MCF 10A (cell line): ENCODE measurements at regions of chr19 and their contacts with region 1.

Region 1: DNA sequence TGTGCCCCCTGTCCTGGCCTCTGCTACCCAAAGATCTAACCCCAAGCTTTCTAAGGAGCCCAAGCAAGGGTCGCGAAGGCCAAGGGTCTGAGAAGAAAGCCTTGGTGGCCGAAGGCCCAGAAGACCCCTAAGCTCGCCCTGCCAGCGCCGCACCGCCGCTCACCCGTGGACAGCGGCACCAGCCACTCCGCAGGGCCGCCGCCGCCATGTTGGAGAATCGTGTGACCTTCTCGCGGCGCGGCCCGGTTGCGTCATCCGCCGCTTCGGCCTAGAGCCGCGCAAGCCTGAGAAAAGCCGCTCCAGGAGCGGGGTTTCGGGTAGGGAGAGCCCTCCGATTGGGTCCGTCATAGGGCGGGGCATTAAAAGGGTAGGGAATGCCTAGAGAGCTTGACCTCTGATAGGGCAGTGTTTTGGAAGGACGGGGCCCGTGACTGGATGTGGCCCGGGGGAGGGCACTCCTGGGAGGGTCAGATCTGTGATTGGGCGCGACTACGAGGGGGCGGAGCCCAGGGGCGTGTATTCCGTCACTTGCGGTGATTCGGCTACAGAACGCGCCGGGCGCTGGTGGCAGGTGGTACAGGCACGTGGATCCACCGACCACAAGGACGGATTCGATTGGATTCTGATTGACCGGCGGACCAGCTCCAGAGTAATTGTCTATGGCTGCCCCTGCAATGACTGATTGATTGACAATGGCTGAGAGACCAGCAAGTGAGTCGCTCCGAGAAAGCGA is at the start of gene TIMM44:
- DNase-seq: peak; percentile 100
- H3K4me3 Mint-ChIP-seq: peak within 1 kb of the TSS; percentile 94
- H3K27ac Mint-ChIP-seq: peak within 1 kb of the TSS; percentile 97
- H3K4me1 Mint-ChIP-seq: peaks cover 11% of the 10 kb centered on the region
- H3K27me3 Mint-ChIP-seq: no peaks in the 10 kb centered on the region
- CTCF ChIP-seq: no peak
- total RNA-seq, gene TIMM44: 91.3 and 142 TPM in 2 replicates

Region 2: GRCh38 chr19:7685541-7686416 is 257.8 kb before region 1 on chr19:
- CTCF ChIA-PET with region 1: no interaction called
- POLR2A ChIA-PET with region 1: no interaction called
- intact Hi-C with region 1: no loop called
- DNase-seq: no peak
- H3K4me3 Mint-ChIP-seq: no peak overlapping the region
- H3K27ac Mint-ChIP-seq: no peak overlapping the region
- H3K4me1 Mint-ChIP-seq: peaks cover 8% of the 10 kb centered on the region
- H3K27me3 Mint-ChIP-seq: no peaks in the 10 kb centered on the region
- CTCF ChIP-seq: no peak

Region 3: GRCh38 chr19:7762719-7763293 is 180.8 kb before region 1 on chr19 and contains the start of gene CLEC4M:
- CTCF ChIA-PET with region 1: no interaction called
- POLR2A ChIA-PET with region 1: no interaction called
- intact Hi-C with region 1: no loop called
- DNase-seq: no peak
- H3K4me3 Mint-ChIP-seq: no peak within 1 kb of the TSS
- H3K27ac Mint-ChIP-seq: no peak within 1 kb of the TSS
- H3K4me1 Mint-ChIP-seq: no peaks in the 10 kb centered on the region
- H3K27me3 Mint-ChIP-seq: peaks cover 41% of the 10 kb centered on the region
- CTCF ChIP-seq: no peak
- total RNA-seq, gene CLEC4M: not detected in 2 replicates

Region 4: DNA sequence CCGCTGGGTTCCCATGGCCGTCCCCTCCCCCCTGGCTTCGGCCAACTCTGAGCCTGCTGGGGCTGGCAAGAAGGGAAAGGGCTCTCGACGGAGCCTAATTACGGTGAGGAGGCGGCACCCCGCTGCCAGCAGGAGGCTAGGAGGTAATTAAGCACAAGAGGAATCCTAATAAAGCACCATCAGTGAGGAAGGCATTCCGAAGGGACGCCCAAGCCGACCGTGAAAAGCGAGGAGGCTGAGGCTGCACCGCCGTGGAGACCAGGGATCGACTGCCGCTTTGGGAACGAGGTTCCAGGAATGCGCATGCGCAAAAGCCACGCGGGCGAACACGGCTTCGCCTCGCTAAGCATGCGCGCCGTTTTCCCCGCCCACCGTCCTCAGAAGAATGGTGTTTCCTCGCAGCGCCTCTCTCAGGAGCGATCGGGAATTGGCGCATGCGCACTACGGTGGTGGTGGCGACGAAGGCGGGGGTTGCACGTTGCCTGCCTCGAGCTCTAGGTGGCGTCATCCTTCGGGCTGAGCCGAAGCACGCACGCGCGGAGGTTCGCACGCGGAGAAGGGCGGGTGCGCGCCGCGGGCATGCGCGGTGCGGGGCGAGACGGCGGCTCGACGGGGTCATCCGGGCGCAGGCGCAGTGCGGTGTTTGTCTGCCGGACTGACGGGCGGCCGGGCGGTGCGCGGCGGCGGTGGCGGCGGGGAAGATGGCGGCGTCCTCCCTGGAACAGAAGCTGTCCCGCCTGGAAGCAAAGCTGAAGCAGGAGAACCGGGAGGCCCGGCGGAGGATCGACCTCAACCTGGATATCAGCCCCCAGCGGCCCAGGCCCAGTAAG is 40.2 kb before region 1 on chr19 and contains the start of gene MAP2K7:
- CTCF ChIA-PET with region 1: interaction called, 5 read pairs
- POLR2A ChIA-PET with region 1: interaction called, 29 read pairs
- intact Hi-C with region 1: no loop called
- DNase-seq: peak; percentile 100
- H3K4me3 Mint-ChIP-seq: peak within 1 kb of the TSS; percentile 97
- H3K27ac Mint-ChIP-seq: peak within 1 kb of the TSS; percentile 98
- H3K4me1 Mint-ChIP-seq: peaks cover 32% of the 10 kb centered on the region
- H3K27me3 Mint-ChIP-seq: no peaks in the 10 kb centered on the region
- CTCF ChIP-seq: peak; percentile 42
- total RNA-seq, gene MAP2K7: 30.5 and 36.3 TPM in 2 replicates

Region 5: GRCh38 chr19:7928736-7929701 is 14.6 kb before region 1 on chr19:
- CTCF ChIA-PET with region 1: interaction called, 15 read pairs
- POLR2A ChIA-PET with region 1: interaction called, 56 read pairs
- intact Hi-C with region 1: no loop called
- DNase-seq: peak; percentile 82
- H3K4me3 Mint-ChIP-seq: peak overlapping the region; percentile 62
- H3K27ac Mint-ChIP-seq: peak overlapping the region; percentile 93
- H3K4me1 Mint-ChIP-seq: peaks cover 13% of the 10 kb centered on the region
- H3K27me3 Mint-ChIP-seq: no peaks in the 10 kb centered on the region
- CTCF ChIP-seq: peak; percentile 34

Region 6: DNA sequence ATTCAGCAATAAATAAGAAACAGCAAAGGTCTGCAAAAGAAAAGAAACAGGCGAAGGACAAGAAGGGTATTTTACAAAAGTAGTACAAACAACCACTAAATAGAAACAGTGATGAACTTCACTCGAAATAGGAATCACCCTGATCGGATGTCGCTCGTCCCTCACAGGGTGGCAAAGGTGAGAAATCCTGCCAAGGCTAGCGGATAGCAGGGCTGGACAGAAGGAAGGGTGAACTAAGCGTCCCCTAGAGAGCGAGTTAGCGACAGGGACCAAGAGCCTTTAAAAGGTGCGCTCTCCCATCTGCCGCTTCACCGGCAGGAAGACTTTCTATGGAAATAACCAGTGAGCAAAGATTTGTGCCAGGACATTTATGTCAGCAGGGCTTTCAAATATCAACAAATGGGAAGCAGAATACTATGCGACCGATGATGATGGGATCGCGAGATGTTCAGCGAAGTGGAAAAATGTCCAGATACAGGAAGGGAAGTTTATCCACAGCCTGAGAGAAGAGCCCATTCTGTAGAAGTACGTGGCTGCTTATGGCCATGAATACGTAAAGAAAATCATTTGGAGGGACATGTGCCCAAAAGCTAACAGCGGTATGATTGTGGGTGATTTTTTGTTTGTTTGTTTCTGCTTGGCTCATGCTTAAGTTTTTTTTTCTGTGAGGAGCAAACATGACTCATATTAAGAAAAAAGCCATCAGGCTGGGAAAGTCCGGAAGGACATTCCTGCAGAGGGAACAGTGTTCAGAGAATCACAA is 42.9 kb after region 1 on chr19:
- CTCF ChIA-PET with region 1: interaction called, 17 read pairs
- POLR2A ChIA-PET with region 1: interaction called, 21 read pairs
- intact Hi-C with region 1: loop called (anchors 5 kb)
- DNase-seq: peak; percentile 71
- H3K4me3 Mint-ChIP-seq: peak overlapping the region; percentile 50
- H3K27ac Mint-ChIP-seq: peak overlapping the region; percentile 95
- H3K4me1 Mint-ChIP-seq: peaks cover 48% of the 10 kb centered on the region
- H3K27me3 Mint-ChIP-seq: no peaks in the 10 kb centered on the region
- CTCF ChIP-seq: no peak

Region 7: DNA sequence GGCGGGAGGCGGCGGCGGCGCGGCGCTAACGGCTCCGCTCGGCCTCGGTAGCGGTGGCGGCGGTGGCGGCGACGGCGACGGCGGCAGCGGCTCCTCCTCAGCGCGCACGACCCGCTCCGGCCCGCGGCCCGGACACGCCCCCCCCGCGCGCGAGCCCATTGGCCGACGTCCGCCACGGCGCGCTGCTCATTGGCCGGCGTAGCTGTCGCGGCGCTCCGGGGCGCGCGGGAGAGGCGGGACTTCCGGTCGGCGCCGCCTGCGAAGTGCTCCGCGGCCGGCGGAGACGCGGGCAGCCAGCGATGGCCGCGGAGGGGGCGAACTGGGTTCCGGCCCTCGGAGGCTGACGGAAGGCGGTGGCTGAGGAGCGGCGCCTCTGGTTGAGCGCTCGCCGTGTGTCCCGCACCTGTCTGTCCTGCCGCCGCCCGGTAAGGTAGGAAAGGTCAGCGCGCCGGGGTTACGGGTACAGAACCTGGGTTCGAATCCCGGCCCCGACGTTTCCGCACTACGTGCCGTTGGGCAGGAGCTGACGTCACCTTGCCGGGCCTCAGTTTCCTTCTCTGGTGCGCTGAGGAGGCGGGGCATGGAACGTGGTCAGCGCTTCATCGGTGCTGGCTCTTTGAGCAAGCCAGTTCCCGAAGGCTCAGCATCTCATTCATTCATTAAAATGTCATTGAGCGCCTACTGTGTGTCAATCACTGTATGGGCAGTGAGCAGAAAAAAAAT is 62.1 kb after region 1 on chr19 and contains the start of gene ELAVL1:
- CTCF ChIA-PET with region 1: interaction called, 47 read pairs
- POLR2A ChIA-PET with region 1: interaction called, 82 read pairs
- intact Hi-C with region 1: loop called (anchors 1 kb)
- DNase-seq: peak; percentile 88
- H3K4me3 Mint-ChIP-seq: peak within 1 kb of the TSS; percentile 95
- H3K27ac Mint-ChIP-seq: peak within 1 kb of the TSS; percentile 71
- H3K4me1 Mint-ChIP-seq: peaks cover 19% of the 10 kb centered on the region
- H3K27me3 Mint-ChIP-seq: no peaks in the 10 kb centered on the region
- CTCF ChIP-seq: no peak
- total RNA-seq, gene ELAVL1: 53.7 and 58.1 TPM in 2 replicates

Region 8: GRCh38 chr19:8252922-8253589 is 309.4 kb after region 1 on chr19:
- CTCF ChIA-PET with region 1: interaction called, 23 read pairs
- POLR2A ChIA-PET with region 1: interaction called, 11 read pairs
- intact Hi-C with region 1: loop called (anchors 1 kb)
- DNase-seq: peak; percentile 86
- H3K4me3 Mint-ChIP-seq: no peak overlapping the region
- H3K27ac Mint-ChIP-seq: no peak overlapping the region
- H3K4me1 Mint-ChIP-seq: no peaks in the 10 kb centered on the region
- H3K27me3 Mint-ChIP-seq: no peaks in the 10 kb centered on the region
- CTCF ChIP-seq: peak; percentile 97